ENCODE measurements at regions of chr19 and their contacts with region 1.

Region 1: GRCh38 chr19:39546599-39546998 is 6.6 kb upstream of the EID2 start:
- DNase-seq: peak in 1 of 2 experiments; percentile 45
- ATAC-seq: peak in 1 of 2 experiments; percentile 17; a peak in 2 of 6 replicates
- H3K4me3 ChIP-seq: no peak overlapping the region
- H3K27ac ChIP-seq: no peak overlapping the region
- H3K4me1 ChIP-seq: no peaks in the 10 kb centered on the region
- CTCF ChIP-seq: no peak
- EP300 ChIP-seq: no peak
- POLR2A ChIP-seq: no peak
- RAD21 ChIP-seq: no peak

Region 2: DNA sequence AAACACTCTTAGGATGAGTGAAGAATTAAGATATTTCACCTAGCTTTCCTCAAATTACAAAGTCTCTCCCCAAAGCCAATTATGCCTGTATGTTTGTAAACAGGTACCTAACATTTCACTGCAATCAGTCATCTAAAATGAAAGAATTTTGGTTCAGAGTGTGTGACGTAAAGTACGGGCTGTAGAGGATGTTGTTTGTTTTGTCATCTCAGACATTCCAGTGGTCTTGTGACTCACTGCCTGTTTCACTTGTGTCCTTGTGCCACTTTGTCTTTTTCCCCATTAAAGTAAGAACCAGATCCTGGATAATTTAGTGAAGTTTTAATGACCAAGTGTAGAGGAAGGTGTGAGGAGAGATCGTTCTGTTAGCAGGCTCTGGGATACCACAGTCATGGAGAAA is 22.0 kb after region 1 on chr19:
- CTCF ChIA-PET with region 1: interaction called, 80 read pairs
- POLR2A ChIA-PET with region 1: no interaction called
- DNase-seq: peak; percentile 27 to 37
- ATAC-seq: peak in 1 of 2 experiments; percentile 43; a peak in 2 of 6 replicates
- H3K4me3 ChIP-seq: no peak overlapping the region
- H3K27ac ChIP-seq: no peak overlapping the region
- H3K4me1 ChIP-seq: peaks cover 7% of the 10 kb centered on the region; the same call in 2 of the 3 replicates
- CTCF ChIP-seq: no peak
- EP300 ChIP-seq: no peak
- POLR2A ChIP-seq: no peak
- RAD21 ChIP-seq: no peak

Region 3: GRCh38 chr19:39623653-39624290 is 77.2 kb after region 1 on chr19:
- CTCF ChIA-PET with region 1: interaction called, 24 read pairs
- POLR2A ChIA-PET with region 1: no interaction called
- DNase-seq: no peak
- ATAC-seq: no peak
- H3K4me3 ChIP-seq: no peak overlapping the region
- H3K27ac ChIP-seq: no peak overlapping the region
- H3K4me1 ChIP-seq: no peaks in the 10 kb centered on the region
- CTCF ChIP-seq: no peak
- EP300 ChIP-seq: 0 out of 5 replicates have a peak, but pooled peaks of 1 of the 2 experiments have one; percentile 6
- POLR2A ChIP-seq: no peak
- RAD21 ChIP-seq: no peak

Region 4: GRCh38 chr19:39684263-39684662 is 137.7 kb after region 1 on chr19:
- CTCF ChIA-PET with region 1: interaction called, 585 read pairs
- POLR2A ChIA-PET with region 1: no interaction called
- DNase-seq: no peak
- ATAC-seq: no peak
- H3K4me3 ChIP-seq: no peak overlapping the region
- H3K27ac ChIP-seq: no peak overlapping the region
- H3K4me1 ChIP-seq: no peaks in the 10 kb centered on the region
- CTCF ChIP-seq: no peak
- EP300 ChIP-seq: no peak
- POLR2A ChIP-seq: no peak
- RAD21 ChIP-seq: no peak

Region 5: DNA sequence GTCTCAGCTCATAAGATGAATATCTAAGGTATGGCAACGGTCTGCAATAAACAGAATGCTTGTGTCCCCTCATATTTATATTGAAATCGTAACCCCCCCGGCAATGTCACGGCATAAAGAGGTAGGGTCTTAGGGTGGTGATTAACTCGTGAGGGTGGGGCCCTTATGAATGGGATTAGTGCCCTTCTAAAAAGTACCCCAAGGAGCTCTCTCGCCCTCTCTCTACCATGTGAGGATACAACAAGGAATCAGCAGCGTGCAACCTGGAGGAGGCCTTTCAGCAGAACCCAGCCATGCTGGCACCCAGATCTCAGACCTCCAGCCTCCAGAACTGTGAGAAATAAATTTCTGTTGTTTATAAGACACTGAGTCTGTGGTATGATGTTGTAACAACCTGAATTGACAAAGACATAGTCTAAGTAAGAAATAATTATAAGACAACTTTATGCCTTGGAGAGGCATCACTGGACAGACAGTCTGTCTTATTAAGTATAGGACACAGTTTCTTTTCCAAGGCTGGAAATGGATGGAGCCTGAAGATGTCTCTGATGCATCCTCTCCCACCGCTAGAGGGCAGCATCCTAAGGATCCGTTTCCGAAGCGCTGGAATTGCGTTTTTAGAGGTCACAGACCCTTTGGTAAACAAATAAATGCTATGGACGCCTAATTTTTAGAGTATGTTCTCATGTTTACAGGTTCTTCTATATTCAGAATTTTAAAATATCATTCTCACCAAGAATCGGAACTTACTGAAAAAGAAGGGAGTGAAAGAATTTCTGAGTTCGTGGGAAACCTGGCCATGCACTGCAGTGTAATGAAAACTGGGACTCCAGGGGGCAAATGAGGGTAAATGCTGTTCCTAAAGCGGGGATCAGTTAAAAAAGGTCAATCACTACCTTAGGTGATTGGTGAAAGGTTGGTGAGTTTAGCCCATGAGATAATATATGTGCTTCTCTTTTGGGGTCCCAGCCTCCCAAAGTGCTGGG is 218.8 kb after region 1 on chr19:
- CTCF ChIA-PET with region 1: interaction called, 15 read pairs
- POLR2A ChIA-PET with region 1: no interaction called
- DNase-seq: peak; percentile 41 to 82
- ATAC-seq: peak; percentile 55 to 77; a peak in 3 of 6 replicates
- H3K4me3 ChIP-seq: no peak overlapping the region
- H3K27ac ChIP-seq: no peak overlapping the region
- H3K4me1 ChIP-seq: no peaks in the 10 kb centered on the region
- CTCF ChIP-seq: peak; percentile 94
- EP300 ChIP-seq: no peak
- POLR2A ChIP-seq: no peak
- RAD21 ChIP-seq: peak; percentile 39 to 63; a peak in 3 of 5 replicates

Region 6: DNA sequence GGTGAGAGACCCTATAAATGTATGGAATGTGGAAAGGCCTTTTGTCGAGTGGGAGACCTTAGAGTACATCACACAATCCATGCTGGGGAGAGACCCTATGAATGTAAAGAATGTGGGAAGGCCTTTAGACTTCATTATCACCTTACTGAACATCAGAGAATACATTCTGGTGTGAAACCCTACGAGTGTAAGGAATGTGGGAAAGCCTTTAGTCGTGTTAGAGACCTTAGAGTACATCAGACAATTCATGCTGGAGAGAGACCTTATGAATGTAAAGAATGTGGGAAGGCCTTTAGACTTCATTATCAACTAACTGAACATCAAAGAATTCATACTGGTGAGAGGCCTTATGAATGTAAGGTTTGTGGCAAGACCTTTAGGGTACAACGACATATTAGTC is 467.4 kb after region 1 on chr19:
- CTCF ChIA-PET with region 1: interaction called, 13 read pairs
- POLR2A ChIA-PET with region 1: no interaction called
- DNase-seq: no peak
- ATAC-seq: no peak
- H3K4me3 ChIP-seq: no peak overlapping the region
- H3K27ac ChIP-seq: no peak overlapping the region
- H3K4me1 ChIP-seq: no peaks in the 10 kb centered on the region
- CTCF ChIP-seq: no peak
- EP300 ChIP-seq: no peak
- POLR2A ChIP-seq: no peak
- RAD21 ChIP-seq: no peak